Right ventricle myocardium inferior (tissue), 1 donor: ENCODE measurements at regions of chr2 and their contacts with region 1.

Region 1: GRCh38 chr2:207769597-207770486 is at the start of gene FZD5:
- DNase-seq: peak; percentile 99
- ATAC-seq: peak; percentile 97
- total RNA-seq, gene FZD5: 4.1 TPM

Region 2: GRCh38 chr2:207513551-207514257 is 256.1 kb before region 1 on chr2:
- intact Hi-C with region 1: no loop called
- DNase-seq: no peak
- ATAC-seq: no peak

Region 3: GRCh38 chr2:207692206-207693065 is 77.4 kb before region 1 on chr2:
- intact Hi-C with region 1: no loop called
- DNase-seq: no peak
- ATAC-seq: peak; percentile 50

Region 4: GRCh38 chr2:207819839-207820784 is 50.3 kb after region 1 on chr2:
- intact Hi-C with region 1: loop called (anchors 5 kb)
- DNase-seq: no peak
- ATAC-seq: no peak

Region 5: DNA sequence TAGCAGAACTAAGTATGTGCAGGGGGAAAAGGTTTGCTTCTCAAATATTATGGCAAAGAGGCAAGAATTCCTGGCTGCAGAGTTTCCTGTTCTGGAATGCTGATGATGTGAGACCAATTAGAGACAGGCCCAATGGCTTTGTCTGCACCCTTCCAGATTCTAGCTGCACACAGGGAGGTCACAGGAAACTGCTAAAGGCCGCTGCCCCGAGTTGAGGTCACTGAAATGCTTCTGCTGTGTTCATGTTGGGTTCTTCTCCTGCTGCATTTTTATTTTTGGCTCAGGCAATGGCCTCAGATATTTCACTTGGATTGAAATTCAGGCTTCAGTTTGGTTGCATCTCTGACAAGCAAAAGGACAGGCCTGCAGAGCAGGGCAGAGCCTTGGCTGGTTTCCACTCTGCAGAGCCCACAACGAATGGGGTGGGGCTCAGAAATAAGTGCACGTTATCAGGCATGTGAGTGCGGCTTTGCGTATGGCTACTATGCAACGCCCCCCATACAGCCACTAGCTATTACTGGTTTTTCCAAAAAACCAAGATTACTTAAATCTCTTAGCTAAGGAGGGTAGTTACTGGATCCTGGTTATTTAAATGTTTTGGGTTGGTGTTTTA is 66.8 kb after region 1 on chr2:
- intact Hi-C with region 1: loop called (anchors 5 kb)
- DNase-seq: no peak
- ATAC-seq: peak; percentile 94

Region 6: DNA sequence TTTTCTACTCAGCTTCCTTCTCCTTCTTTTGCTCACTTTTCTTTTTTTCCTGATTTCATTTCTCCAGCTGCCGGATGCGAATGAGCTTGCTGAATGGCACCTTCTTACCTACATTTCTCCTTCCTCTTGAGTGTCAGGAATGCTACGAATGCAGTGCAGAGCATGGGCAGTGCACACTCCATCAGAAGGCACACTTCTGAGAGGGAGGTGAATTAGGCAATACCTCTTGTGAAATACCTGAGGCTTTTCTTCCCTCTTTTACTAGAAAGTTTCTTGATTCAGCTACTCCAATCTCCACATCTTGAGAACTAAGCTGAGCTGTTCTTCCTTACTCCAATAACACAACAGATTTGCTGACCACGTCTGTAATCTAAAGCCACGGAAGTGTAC is 204.4 kb after region 1 on chr2:
- intact Hi-C with region 1: loop called (anchors 2 kb)
- DNase-seq: no peak
- ATAC-seq: no peak

Region 7: GRCh38 chr2:208033758-208034502 is 264.1 kb after region 1 on chr2:
- intact Hi-C with region 1: loop called (anchors 5 kb)
- DNase-seq: no peak
- ATAC-seq: peak; percentile 59